HEK293 (cell line): ENCODE measurements at regions of chr19 and their contacts with region 1.

Region 1: DNA sequence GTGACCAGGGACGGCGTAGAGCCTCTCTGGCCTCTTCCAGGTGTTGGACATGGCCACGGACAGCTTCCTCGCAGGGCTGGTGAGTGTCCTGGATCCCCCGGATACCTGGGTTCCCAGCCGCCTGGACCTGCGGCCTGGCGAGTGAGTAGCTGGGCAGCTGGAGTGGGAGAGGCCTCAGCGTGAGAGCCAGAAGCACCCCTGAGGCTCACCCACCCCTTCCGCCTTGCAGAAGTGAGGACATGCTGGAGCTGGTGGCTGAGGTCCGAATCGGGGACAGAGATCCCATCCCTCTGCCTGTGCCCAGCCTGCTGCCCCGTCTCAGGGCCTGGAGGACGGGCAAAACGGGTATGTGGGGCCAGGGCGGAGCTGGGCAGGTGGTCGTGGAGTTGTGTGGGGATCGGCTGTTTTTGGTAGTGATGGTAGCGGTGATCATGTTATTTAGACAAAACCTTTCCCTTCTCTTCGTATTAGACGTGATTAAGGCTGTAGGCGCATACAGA is 4.5 kb downstream of the SCAF1 start:
- H3K4me3 ChIP-seq: no peak overlapping the region
- H3K27ac ChIP-seq: no peak overlapping the region
- H3K4me1 ChIP-seq: peaks cover 7% of the 10 kb centered on the region
- CTCF ChIP-seq: no peak

Region 2: DNA sequence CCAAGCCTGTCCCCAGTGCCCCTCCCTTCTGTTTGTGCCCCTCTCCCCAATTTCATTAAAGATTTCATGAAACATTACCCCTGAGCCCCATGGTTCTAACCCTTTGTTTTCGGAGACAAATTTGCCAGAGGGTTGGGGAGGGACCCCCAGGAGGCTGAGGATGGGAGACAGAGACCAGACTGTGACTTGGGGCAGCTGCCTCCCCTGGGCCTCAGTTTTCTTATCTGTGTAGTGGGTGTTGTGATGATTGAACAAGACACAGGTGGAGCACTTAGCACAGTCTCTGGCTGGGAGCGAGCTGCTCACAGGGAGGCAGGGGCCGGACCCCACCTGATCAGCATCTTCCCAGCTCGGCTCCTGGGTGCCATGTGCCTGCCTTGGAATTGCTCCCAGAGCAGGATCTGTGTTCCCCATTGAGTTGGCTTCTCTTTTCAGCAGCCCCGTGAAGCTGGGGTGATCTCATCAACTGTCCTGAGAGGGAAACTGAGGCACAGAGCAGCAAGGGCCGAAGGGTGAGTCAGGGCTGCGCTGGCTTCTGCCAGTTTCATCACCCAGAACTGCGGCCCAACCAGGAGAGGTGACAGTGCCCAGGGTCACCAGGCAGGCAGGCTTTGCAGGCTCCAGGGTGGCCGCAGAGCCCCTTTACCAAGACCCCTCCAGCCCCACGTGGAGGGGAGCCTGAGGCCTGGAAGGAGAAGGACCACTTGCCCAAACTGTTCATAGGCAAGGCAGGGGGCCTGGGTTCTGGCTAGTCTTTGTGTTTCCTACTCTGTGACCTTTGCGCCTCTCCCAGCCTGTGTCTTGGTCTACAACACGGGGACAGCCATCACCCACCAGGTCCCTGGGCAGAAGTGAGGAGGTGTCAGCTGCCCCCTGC is 12.3 kb after region 1 on chr19:
- CTCF ChIA-PET with region 1: interaction called, 4 read pairs
- POLR2A ChIA-PET with region 1: interaction called, 85 read pairs
- H3K4me3 ChIP-seq: no peak overlapping the region
- H3K27ac ChIP-seq: no peak overlapping the region
- H3K4me1 ChIP-seq: no peaks in the 10 kb centered on the region
- CTCF ChIP-seq: no peak